ENCODE measurements at regions of chr7 and their contacts with region 1.

Region 1: GRCh38 chr7:55572378-55573233 is at the start of gene VOPP1:
- DNase-seq: peak; percentile 59 to 84
- H3K4me3 ChIP-seq: peak within 1 kb of the TSS; percentile 91
- H3K27ac ChIP-seq: peak within 1 kb of the TSS; percentile 80
- H3K4me1 ChIP-seq: peaks cover 49% of the 10 kb centered on the region
- H3K27me3 ChIP-seq: no peaks in the 10 kb centered on the region
- CTCF ChIP-seq: no peak
- total RNA-seq, gene VOPP1: 200 and 207 TPM in 2 replicates

Region 2: DNA sequence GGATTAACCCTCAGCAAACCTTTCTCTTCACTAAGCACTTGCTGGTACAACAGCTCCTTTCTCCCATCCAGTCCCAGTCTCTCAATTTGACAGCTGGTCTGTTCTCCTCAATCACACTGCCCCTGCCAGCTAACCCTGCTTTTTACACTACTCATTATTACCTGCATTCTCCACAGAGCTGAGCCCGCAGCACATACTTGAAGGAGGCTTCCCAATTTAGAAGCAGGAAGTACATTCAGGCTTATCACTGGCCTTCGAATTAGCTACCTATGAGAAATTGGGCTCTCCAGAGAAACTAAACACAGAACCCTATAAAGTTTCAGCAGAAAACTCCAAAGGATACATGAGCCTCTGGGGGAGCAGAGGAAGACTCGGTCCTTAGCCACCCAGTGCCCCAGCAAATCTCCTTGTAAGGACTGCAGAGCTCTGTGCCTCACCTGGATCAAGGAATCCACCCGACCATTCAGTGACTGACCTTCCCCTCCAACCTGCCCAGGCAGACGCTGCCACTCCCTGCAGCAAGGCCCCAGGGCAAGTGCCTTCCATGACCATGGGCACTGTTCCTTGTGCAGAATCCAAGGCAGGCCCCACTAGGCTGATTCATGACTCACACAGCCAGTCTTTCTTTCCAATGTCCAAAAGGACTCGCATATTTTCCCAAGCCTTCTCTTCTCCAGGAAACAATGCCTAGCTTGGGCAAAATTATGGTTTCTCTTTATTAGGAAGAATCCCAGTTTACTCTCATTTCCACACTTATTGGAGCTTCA is 68.3 kb before region 1 on chr7:
- CTCF ChIA-PET with region 1: interaction called, 4 read pairs
- POLR2A ChIA-PET with region 1: interaction called, 6 read pairs
- intact Hi-C with region 1: loop called (anchors 2 kb)
- DNase-seq: peak; percentile 68 to 91
- H3K4me3 ChIP-seq: no peak overlapping the region
- H3K27ac ChIP-seq: peak overlapping the region; percentile 23
- H3K4me1 ChIP-seq: peaks cover 29% of the 10 kb centered on the region
- H3K27me3 ChIP-seq: no peaks in the 10 kb centered on the region
- CTCF ChIP-seq: no peak

Region 3: DNA sequence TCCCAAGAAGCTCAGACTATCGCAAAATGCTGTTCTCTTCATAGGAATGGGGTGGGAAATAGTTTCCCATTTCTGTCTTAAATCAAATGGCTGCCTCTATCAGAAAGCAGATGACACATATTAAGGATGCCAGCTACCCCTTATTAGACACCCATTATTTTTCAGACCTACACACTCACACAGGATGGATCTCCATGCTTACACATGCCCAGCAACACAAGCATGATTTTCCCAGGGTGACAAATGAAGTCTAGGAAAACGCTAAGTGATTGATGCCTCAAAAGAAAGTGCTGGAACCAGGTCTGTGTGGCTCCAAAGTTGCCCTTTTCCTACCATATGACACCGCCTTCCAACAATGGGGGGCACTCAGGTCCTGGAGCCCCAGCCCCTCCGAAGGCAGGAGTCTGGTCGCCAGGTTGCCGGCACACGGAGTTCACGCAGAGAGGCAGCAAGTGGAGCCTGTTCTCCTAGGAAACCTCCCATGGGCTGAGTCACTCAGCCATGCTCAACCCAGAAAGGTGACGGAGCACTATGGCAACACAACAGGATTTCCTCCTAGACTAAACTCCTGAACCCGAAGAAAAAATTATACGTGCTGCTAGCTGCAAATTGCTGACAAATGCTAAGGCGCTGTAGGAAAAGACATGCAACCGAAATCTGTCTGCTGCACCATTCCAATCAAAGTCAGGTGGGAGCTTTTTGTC is 20.1 kb before region 1 on chr7:
- CTCF ChIA-PET with region 1: interaction called, 4 read pairs
- POLR2A ChIA-PET with region 1: interaction called, 7 read pairs
- intact Hi-C with region 1: loop called (anchors 1 kb)
- DNase-seq: peak; percentile 90 to 100
- H3K4me3 ChIP-seq: peak overlapping the region; percentile 45
- H3K27ac ChIP-seq: peak overlapping the region; percentile 82
- H3K4me1 ChIP-seq: peaks cover 100% of the 10 kb centered on the region
- H3K27me3 ChIP-seq: no peaks in the 10 kb centered on the region
- CTCF ChIP-seq: no peak

Region 4: DNA sequence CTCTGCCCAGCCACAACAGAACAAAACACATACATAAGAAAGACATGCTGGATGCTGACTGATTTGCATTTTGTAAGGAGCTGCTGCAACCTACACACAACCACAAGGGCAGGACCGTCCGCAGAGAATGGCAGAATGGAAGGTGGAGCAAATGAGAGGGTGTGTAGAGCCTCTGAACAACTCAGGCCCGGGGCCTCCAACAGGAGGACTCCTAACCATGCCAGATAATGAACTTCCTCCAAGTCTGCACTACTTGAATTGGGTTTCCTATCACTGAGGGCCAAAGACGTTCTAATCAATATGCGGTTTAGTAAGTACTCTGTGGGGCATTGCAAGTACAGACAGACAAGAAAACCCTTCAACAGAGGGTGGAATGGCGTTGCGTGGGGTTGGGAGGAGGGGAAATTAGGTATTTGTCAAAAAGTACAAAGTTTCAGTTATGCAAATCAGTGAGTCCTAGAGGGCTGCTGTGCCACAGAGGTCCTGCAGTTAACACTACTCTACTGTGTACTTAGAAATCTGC is 14.9 kb before region 1 on chr7:
- CTCF ChIA-PET with region 1: interaction called, 4 read pairs
- POLR2A ChIA-PET with region 1: interaction called, 7 read pairs
- intact Hi-C with region 1: loop called (anchors 1 kb)
- DNase-seq: no peak
- H3K4me3 ChIP-seq: no peak overlapping the region
- H3K27ac ChIP-seq: peak overlapping the region; percentile 82
- H3K4me1 ChIP-seq: peaks cover 81% of the 10 kb centered on the region
- H3K27me3 ChIP-seq: no peaks in the 10 kb centered on the region
- CTCF ChIP-seq: no peak

Region 5: DNA sequence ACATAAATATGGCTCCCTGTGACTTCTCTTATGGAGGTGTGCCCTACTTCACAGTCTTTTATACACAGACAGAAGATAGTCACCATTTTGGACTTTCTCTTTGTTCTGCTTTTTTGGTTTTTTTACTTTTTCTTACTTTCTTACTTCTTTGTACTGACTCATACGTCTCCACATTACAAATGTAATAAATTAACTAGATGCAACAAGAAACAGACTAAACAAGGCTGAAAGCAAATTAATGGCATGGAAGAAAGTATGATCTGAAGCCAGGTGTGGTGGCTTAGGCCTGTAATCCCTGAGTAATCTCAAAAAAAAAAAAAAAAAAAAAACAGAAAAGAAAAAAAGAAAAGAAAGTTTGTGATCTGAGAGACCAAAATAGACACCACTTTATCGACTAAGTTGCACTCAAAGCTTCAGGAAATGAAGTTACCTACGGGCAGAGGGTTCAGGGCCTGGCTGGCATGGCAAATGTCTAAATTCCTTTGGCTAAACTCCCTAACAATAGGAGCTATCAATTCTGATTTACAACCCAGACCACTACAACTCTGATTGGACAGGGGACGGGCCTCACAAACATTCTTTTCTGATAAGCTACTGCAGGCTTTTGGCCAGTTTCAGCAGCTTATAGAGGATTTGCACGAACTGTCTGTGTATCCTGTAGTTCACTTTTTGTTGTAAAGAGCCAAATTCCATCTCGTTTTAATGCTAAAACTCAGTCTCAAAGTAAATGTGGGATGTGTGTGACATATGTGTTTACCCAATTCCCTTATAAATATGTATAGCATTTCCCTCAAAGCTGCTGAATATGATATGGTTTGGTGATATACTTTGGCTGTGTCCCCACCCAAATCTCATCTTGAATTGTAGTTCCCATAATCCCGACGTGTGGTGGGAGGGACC is 160.9 kb after region 1 on chr7:
- CTCF ChIA-PET with region 1: no interaction called
- POLR2A ChIA-PET with region 1: no interaction called
- intact Hi-C with region 1: no loop called
- DNase-seq: peak in 1 of 2 experiments; percentile 28
- H3K4me3 ChIP-seq: no peak overlapping the region
- H3K27ac ChIP-seq: no peak overlapping the region
- H3K4me1 ChIP-seq: no peaks in the 10 kb centered on the region
- H3K27me3 ChIP-seq: no peaks in the 10 kb centered on the region
- CTCF ChIP-seq: no peak